ENCODE measurements at regions of chr1 and their contacts with region 1.

Region 1: GRCh38 chr1:216815260-216816131 is 92.3 kb upstream of the ESRRG start:
- DNase-seq: peak; percentile 84 to 88
- ATAC-seq: peak; percentile 92 to 93
- H3K4me3 ChIP-seq: peak overlapping the region in 2 of 4 donors; percentile 11 to 17
- H3K27ac ChIP-seq: peak overlapping the region; percentile 82 to 89 (median 86)
- H3K4me1 ChIP-seq: peaks cover 25 to 58% of the 10 kb centered on the region in 2 donors
- H3K27me3 ChIP-seq: no peaks in the 10 kb centered on the region
- CTCF ChIP-seq: no peak
- POLR2A ChIP-seq: no peak

Region 2: GRCh38 chr1:216750012-216750627 is 65.4 kb before region 1 on chr1:
- in situ Hi-C with region 1: no loop called
- intact Hi-C with region 1: loop called (anchors 5 kb)
- DNase-seq: peak; percentile 31 to 42
- ATAC-seq: peak; percentile 93 to 96
- H3K4me3 ChIP-seq: no peak overlapping the region
- H3K27ac ChIP-seq: peak overlapping the region; percentile 18 to 58 (median 39)
- H3K4me1 ChIP-seq: peaks cover 5 to 8% of the 10 kb centered on the region in 2 donors
- H3K27me3 ChIP-seq: no peaks in the 10 kb centered on the region
- CTCF ChIP-seq: peak; percentile 25 to 69 (median 52)
- POLR2A ChIP-seq: no peak